ENCODE measurements at regions of chr18 and their contacts with region 1.

Region 1: GRCh38 chr18:34857320-34857719 is 147.2 kb downstream of the DTNA start:
- DNase-seq: no peak
- H3K4me3 Mint-ChIP-seq: no peak overlapping the region
- H3K27ac Mint-ChIP-seq: no peak overlapping the region
- H3K4me1 Mint-ChIP-seq: peaks cover 6% of the 10 kb centered on the region
- H3K27me3 Mint-ChIP-seq: peaks cover 31% of the 10 kb centered on the region

Region 2: DNA sequence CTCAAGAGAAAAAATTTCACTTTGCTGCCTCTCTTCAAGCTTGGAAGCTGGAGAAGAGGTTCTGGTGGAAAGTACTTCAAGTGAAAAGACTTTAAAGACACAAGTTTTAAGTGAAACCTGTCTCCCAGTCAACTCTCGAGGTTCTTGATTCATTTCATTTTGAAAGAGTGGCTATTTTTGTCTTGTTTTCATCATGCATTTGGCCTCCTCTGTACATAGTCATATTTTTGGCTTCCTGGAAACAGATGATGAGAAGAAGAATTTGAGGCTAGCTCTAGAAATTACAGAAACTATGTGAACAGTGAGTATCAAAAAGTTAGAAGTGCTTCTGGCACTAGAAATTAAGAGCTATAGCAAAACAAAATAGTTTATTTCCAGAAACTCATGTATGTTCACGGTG is 22.4 kb before region 1 on chr18:
- CTCF ChIA-PET with region 1: no interaction called
- POLR2A ChIA-PET with region 1: no interaction called
- intact Hi-C with region 1: loop called (anchors 1 kb)
- DNase-seq: no peak
- H3K4me3 Mint-ChIP-seq: no peak overlapping the region
- H3K27ac Mint-ChIP-seq: peak overlapping the region; percentile 14
- H3K4me1 Mint-ChIP-seq: peaks cover 16% of the 10 kb centered on the region
- H3K27me3 Mint-ChIP-seq: peaks cover 15% of the 10 kb centered on the region

Region 3: DNA sequence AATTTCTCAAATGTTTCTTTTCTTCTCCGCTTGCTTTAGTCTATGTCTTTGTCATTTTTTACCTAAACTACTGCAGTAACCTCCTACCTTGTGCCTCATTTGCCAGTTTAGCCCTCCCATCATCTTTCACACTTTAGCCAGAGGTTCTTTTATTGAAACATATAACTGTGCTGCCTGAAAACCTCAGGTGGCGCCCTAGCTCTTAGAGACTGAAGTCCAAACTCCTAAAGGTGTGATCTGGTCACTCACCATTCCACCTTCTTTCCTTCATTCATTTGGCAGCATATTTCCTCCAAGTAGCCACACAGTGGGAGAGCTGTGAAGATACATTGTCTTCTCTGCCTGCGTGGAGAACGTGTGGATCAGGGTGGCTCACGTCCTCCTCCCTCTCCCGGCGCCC is 85.7 kb after region 1 on chr18:
- CTCF ChIA-PET with region 1: no interaction called
- POLR2A ChIA-PET with region 1: no interaction called
- intact Hi-C with region 1: no loop called
- DNase-seq: no peak
- H3K4me3 Mint-ChIP-seq: no peak overlapping the region
- H3K27ac Mint-ChIP-seq: no peak overlapping the region
- H3K4me1 Mint-ChIP-seq: no peaks in the 10 kb centered on the region
- H3K27me3 Mint-ChIP-seq: peaks cover 8% of the 10 kb centered on the region

Region 4: DNA sequence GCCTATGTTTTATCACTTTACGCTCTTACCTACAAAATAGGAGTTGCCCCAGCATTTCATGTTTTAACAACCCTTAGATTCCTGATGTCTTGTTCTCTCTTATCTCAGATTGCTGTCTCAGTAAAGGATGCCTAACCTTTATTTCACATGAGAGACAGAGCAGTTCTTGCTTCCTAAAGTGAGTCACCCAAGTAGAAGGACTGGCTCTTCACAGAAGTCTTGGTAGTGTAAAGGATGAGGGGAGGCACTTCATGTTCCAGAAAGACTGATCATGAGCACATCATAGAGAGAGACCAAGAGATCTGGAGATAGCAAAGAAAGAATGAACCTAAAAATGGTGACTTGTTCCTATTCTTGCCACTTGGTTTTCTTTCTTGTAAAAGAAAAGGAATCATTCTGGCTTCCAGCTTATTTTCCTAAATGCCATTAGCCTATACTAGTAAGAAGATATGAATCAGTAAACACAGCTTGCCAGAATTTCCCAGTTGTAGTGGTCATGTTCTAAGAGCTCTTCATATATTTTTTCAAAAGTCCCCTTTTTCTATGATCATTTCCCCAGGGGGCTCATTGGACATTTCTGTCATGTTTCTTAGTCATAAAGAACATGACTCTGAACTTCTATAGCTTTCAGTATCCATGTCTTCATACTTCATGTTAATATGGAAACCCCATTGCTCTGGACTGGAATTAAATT is 238.8 kb after region 1 on chr18:
- CTCF ChIA-PET with region 1: no interaction called
- POLR2A ChIA-PET with region 1: no interaction called
- intact Hi-C with region 1: loop called (anchors 1 kb)
- DNase-seq: no peak
- H3K4me3 Mint-ChIP-seq: no peak overlapping the region
- H3K27ac Mint-ChIP-seq: peak overlapping the region; percentile 19
- H3K4me1 Mint-ChIP-seq: peaks cover 22% of the 10 kb centered on the region
- H3K27me3 Mint-ChIP-seq: no peaks in the 10 kb centered on the region